GM12878 (cell line): ENCODE measurements at regions of chr11 and their contacts with region 1.

Region 1: GRCh38 chr11:57456960-57457642 is 3.2 kb upstream of the RTN4RL2 start:
- DNase-seq: no peak
- ATAC-seq: peak; percentile 82
- H3K4me3 ChIP-seq: no peak overlapping the region
- H3K27ac ChIP-seq: no peak overlapping the region
- H3K4me1 ChIP-seq: peaks cover 20% of the 10 kb centered on the region
- H3K27me3 ChIP-seq: peaks cover 5% of the 10 kb centered on the region in 2 experiments
- CTCF ChIP-seq: peak; percentile 94 to 100 (median 98); a peak in 5 of 6 replicates
- EP300 ChIP-seq: no peak
- POLR2A ChIP-seq: no peak
- RAD21 ChIP-seq: peak; percentile 90

Region 2: DNA sequence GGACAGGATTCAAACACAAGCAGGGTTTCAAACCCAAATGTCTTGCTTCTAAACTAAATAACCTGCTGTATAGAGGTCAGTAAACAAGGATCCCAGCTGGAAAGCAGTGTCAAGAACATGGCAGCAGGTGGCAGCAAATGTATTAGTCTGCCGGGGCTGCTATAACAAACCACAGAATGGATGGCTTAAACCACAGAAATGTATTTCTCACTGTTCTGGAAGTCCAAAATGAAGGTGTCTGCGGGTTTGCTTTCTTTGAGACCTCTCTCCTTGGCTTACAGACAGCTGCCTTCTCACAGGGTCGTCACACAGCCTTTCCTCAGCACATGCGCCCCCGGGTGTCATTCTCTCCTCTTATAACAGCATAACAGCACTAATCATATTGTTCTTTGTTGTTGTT is 340.4 kb before region 1 on chr11:
- CTCF ChIA-PET with region 1: no interaction called
- POLR2A ChIA-PET with region 1: no interaction called
- RAD21 ChIA-PET with region 1: no interaction called
- SMC1A ChIA-PET with region 1: no interaction called
- in situ Hi-C with region 1: no loop called
- intact Hi-C with region 1: no loop called
- DNase-seq: no peak
- ATAC-seq: peak; percentile 82
- H3K4me3 ChIP-seq: no peak overlapping the region
- H3K27ac ChIP-seq: no peak overlapping the region
- H3K4me1 ChIP-seq: no peaks in the 10 kb centered on the region
- H3K27me3 ChIP-seq: no peaks in the 10 kb centered on the region; a peak in 1 of 4 replicates
- CTCF ChIP-seq: peak; percentile 50 to 59 (median 50)
- EP300 ChIP-seq: no peak
- POLR2A ChIP-seq: no peak
- RAD21 ChIP-seq: peak; percentile 56

Region 3: GRCh38 chr11:57180081-57180561 is 277.0 kb before region 1 on chr11:
- CTCF ChIA-PET with region 1: no interaction called
- POLR2A ChIA-PET with region 1: no interaction called
- RAD21 ChIA-PET with region 1: no interaction called
- SMC1A ChIA-PET with region 1: no interaction called
- in situ Hi-C with region 1: no loop called
- intact Hi-C with region 1: no loop called
- DNase-seq: no peak
- ATAC-seq: no peak
- H3K4me3 ChIP-seq: no peak overlapping the region
- H3K27ac ChIP-seq: no peak overlapping the region
- H3K4me1 ChIP-seq: no peaks in the 10 kb centered on the region
- H3K27me3 ChIP-seq: no peaks in the 10 kb centered on the region; a peak in 3 of 4 replicates
- CTCF ChIP-seq: no peak
- EP300 ChIP-seq: no peak
- POLR2A ChIP-seq: no peak
- RAD21 ChIP-seq: no peak

Region 4: GRCh38 chr11:57426929-57427726 is 30.0 kb before region 1 on chr11 and contains the start of gene SLC43A3:
- CTCF ChIA-PET with region 1: interaction called, 40 read pairs
- POLR2A ChIA-PET with region 1: interaction called, 3 read pairs
- RAD21 ChIA-PET with region 1: interaction called, 14 read pairs
- SMC1A ChIA-PET with region 1: interaction called, 4 read pairs
- in situ Hi-C with region 1: no loop called
- intact Hi-C with region 1: no loop called
- DNase-seq: peak; percentile 41
- ATAC-seq: peak; percentile 80
- H3K4me3 ChIP-seq: peak within 1 kb of the TSS; percentile 88
- H3K27ac ChIP-seq: peak within 1 kb of the TSS; percentile 97
- H3K4me1 ChIP-seq: peaks cover 31% of the 10 kb centered on the region
- H3K27me3 ChIP-seq: no peaks in the 10 kb centered on the region
- CTCF ChIP-seq: no peak
- EP300 ChIP-seq: 0 out of 4 replicates have a peak, but pooled peaks of 1 of the 2 experiments have one; percentile 16
- POLR2A ChIP-seq: peak; percentile 90
- RAD21 ChIP-seq: no peak
- polyA plus RNA-seq, gene SLC43A3: 37.5 to 79.9 TPM

Region 5: DNA sequence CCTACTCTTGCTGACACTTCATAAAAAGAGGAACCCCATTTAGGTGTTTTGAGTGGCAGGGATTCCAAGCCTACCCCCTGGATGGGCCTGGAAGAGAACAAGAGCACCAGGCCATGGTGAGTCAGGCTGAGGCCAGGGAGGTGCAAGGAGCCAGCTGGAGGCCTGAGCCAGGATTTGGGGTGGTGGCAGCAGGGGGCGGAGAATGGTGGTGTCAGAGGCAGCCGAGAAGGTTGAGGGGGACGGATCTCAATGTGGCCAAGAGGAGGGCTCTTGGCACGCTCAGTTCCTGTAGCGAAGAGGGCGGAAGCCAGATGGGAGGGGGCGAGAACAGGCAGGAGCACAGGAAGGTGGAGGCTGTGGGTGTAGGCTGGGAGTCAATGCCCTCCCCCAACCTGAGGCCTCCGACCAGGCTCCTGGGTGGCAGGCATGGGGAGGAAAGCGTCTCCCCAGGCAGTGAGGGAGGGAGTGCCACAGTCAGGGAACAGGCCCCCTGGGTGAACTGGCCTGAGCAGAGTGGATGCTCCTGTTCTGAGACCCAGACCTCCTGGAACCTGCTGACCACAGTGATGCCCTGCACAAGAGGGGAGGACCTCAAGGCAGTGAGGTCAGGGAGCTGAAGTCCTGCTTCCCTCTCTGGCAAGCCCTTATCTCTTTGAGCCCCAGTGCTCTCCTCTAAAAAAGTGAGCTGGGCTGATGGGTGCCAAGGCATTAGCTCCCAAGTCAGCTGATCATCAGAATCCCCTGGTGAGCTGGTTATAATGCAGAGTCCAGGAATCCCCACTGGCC is 17.1 kb after region 1 on chr11:
- CTCF ChIA-PET with region 1: interaction called, 321 read pairs
- POLR2A ChIA-PET with region 1: no interaction called
- RAD21 ChIA-PET with region 1: interaction called, 26 read pairs
- SMC1A ChIA-PET with region 1: interaction called, 95 read pairs
- in situ Hi-C with region 1: no loop called
- intact Hi-C with region 1: no loop called
- DNase-seq: peak; percentile 53
- ATAC-seq: peak; percentile 54
- H3K4me3 ChIP-seq: no peak overlapping the region
- H3K27ac ChIP-seq: 0 out of 2 replicates have a peak overlapping the region, but pooled peaks have one; percentile 35
- H3K4me1 ChIP-seq: peaks cover 24% of the 10 kb centered on the region
- H3K27me3 ChIP-seq: no peaks in the 10 kb centered on the region
- CTCF ChIP-seq: no peak
- EP300 ChIP-seq: no peak
- POLR2A ChIP-seq: no peak
- RAD21 ChIP-seq: no peak

Region 6: DNA sequence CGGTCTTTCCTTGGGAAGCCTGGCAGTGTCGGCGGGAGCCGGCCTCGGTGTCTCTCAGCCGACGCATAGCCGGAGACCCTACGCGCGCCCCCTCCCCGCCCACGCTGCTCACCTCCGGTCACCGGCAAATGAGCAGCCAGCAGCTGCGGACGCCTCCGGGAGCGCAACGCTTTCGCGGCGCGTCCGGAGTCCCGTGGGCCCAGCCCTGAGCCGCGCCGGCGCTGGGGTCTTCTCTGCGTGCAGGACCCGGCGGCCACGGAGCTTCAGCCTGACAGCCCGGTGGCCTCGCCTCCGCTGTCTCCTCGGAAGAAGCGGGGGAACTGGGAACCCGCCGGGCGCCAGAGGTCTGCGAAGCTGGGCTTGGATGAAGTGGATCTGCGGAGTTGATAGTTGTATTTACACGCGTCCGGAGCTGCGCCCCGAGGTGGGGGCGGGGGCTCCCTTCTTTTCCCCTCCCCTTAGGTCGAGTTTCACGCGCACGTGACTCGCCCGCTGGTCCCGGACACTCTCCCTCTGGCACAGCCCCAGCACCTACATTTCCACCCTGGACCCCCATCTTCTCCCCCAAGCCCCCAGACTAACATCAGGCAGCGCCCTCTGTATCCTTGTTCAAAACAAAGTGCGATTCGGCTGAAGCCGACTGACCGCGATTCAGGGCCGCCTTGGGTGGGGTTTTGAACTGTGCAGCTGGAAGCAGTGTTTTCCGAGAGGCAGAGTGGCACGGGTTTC is 58.4 kb after region 1 on chr11 and contains the start of gene SLC43A1:
- CTCF ChIA-PET with region 1: interaction called, 75 read pairs
- POLR2A ChIA-PET with region 1: no interaction called
- RAD21 ChIA-PET with region 1: interaction called, 6 read pairs
- SMC1A ChIA-PET with region 1: interaction called, 12 read pairs
- in situ Hi-C with region 1: no loop called
- intact Hi-C with region 1: no loop called
- DNase-seq: no peak
- ATAC-seq: peak; percentile 66
- H3K4me3 ChIP-seq: peak within 1 kb of the TSS; percentile 90
- H3K27ac ChIP-seq: peak within 1 kb of the TSS; percentile 35
- H3K4me1 ChIP-seq: no peaks in the 10 kb centered on the region
- H3K27me3 ChIP-seq: no peaks in the 10 kb centered on the region
- CTCF ChIP-seq: no peak
- EP300 ChIP-seq: no peak
- POLR2A ChIP-seq: peak; percentile 25; the same call in 1 of the 2 replicates
- RAD21 ChIP-seq: no peak
- polyA plus RNA-seq, gene SLC43A1: 1.0 to 2.4 TPM

Region 7: GRCh38 chr11:57567515-57568329 is 110.6 kb after region 1 on chr11 and contains the start of gene UBE2L6:
- CTCF ChIA-PET with region 1: interaction called, 14 read pairs
- POLR2A ChIA-PET with region 1: no interaction called
- RAD21 ChIA-PET with region 1: no interaction called
- SMC1A ChIA-PET with region 1: interaction called, 3 read pairs
- in situ Hi-C with region 1: no loop called
- intact Hi-C with region 1: no loop called
- DNase-seq: no peak
- ATAC-seq: peak; percentile 84
- H3K4me3 ChIP-seq: peak within 1 kb of the TSS; percentile 100
- H3K27ac ChIP-seq: peak within 1 kb of the TSS; percentile 87
- H3K4me1 ChIP-seq: peaks cover 4% of the 10 kb centered on the region
- H3K27me3 ChIP-seq: no peaks in the 10 kb centered on the region
- CTCF ChIP-seq: peak in 2 of 3 experiments; percentile 43 to 66; a peak in 3 of 6 replicates
- EP300 ChIP-seq: no peak
- POLR2A ChIP-seq: peak; percentile 59
- RAD21 ChIP-seq: no peak
- polyA plus RNA-seq, gene UBE2L6: 262 to 295 TPM